Endothelial cell of umbilical vein (primary cell): ENCODE measurements at regions of chr2 and their contacts with region 1.

Region 1: GRCh38 chr2:240320204-240320993 is 115.1 kb upstream of the GPC1 start:
- DNase-seq: peak; percentile 72
- H3K4me3 ChIP-seq: no peak overlapping the region
- H3K27ac ChIP-seq: peak overlapping the region; percentile 28
- H3K4me1 ChIP-seq: peaks cover 10% of the 10 kb centered on the region
- H3K27me3 ChIP-seq: no peaks in the 10 kb centered on the region
- CTCF ChIP-seq: no peak
- POLR2A ChIP-seq: no peak

Region 2: DNA sequence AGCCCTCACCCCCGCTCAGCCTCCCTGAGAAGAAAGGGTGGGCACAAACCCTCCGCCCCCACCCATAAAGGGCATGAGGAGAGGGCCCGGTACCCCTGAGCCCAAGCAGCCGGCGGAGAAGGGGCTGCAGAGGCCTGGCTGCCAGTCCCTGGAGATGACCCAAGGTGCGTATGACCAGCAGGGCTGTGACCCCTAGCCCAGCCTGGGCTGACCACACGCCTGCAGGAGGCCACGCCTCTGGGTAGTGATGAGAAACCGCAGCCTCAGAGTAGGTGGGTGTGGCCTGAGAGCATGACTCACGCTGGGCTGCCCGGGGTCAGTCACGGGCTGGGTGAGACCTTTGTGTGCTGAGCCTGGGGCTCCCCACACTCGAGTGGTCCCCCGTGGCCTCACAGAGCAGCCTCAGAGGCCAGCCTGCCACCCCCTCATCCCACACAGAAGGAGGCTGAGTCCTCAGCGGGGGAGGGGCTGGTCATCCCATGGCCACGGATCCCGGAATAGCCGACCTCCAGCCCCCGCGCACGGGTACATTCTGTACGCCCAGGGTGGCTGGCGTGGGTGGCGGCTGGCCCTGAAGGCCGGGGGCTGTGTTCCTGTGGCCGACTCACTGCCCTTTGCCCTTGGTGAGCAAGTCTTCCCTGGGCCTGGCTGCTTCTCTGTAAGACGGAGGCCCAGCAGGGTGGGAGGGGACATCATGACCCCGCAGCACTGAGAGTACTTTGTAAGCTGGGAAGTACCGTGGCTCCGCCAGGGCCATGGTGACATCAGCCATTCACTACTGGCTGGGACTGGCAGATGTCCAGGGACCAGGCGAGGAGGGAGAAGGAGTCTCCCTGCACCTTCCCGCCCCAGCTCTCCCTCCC is 69.2 kb before region 1 on chr2:
- CTCF ChIA-PET with region 1: no interaction called
- POLR2A ChIA-PET with region 1: no interaction called
- dilution Hi-C with region 1: no loop called
- intact Hi-C with region 1: loop called (anchors 1 kb)
- DNase-seq: peak; percentile 51
- H3K4me3 ChIP-seq: no peak overlapping the region
- H3K27ac ChIP-seq: peak overlapping the region; percentile 59
- H3K4me1 ChIP-seq: no peaks in the 10 kb centered on the region
- H3K27me3 ChIP-seq: no peaks in the 10 kb centered on the region
- CTCF ChIP-seq: no peak
- POLR2A ChIP-seq: no peak

Region 3: GRCh38 chr2:240284503-240285259 is 35.7 kb before region 1 on chr2:
- CTCF ChIA-PET with region 1: no interaction called
- POLR2A ChIA-PET with region 1: no interaction called
- dilution Hi-C with region 1: no loop called
- intact Hi-C with region 1: loop called (anchors 5 kb)
- DNase-seq: no peak
- H3K4me3 ChIP-seq: no peak overlapping the region
- H3K27ac ChIP-seq: no peak overlapping the region
- H3K4me1 ChIP-seq: no peaks in the 10 kb centered on the region
- H3K27me3 ChIP-seq: no peaks in the 10 kb centered on the region
- CTCF ChIP-seq: no peak
- POLR2A ChIP-seq: no peak